GM23248 (cell line): ENCODE measurements at regions of chr19 and their contacts with region 1.

Region 1: DNA sequence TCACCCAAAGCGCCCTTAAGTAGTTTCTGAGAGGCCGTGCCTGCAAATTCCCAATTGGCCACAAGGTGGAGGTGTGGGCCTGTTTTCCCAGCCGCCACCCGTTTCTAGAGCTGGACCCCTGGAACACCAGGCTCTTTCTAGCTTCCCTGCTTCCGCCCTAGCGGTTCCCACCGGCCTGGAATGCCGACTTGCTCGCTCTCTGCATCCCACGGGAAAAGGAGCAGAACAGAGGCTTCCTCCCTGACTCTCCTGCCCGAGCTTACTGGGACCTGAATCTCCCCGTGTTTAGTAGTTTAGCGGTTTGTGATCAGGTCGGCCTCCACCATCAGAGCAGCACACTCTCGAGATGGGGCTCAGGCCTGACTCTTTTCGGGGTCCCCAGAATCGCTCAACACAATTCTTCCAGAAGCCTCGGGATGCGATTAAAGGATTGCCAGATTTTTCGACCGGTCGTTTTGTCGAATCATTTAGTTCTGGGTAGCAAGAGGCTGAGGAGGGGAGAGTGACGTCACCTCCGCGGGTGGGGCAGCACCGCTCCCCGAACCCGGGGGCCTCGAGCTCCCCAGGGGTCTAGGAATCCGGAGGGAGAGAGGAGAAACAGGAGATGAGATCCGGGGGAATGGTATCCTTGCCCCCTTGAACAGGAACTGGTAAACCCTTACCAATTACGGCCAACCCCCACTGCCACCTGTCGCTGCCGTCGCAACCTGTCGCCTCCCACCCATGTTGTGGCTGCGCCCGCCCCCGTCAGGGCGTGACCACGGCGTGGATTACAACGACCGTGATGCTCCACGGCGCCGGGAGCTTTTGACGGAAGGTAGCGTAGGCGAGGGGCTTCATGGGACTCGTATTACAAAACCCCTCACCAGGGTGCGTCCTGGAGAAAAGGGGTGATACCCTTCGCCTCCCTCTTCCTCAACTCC is 8.0 kb downstream of the NAPSA start:
- DNase-seq: peak; percentile 57
- H3K4me3 ChIP-seq: peak overlapping the region; percentile 62
- H3K27ac ChIP-seq: no peak overlapping the region
- H3K4me1 ChIP-seq: no peaks in the 10 kb centered on the region
- H3K27me3 ChIP-seq: no peaks in the 10 kb centered on the region

Region 2: GRCh38 chr19:50794439-50795237 is 437.2 kb after region 1 on chr19:
- in situ Hi-C with region 1: loop called (anchors 25 kb)
- DNase-seq: peak; percentile 34
- H3K4me3 ChIP-seq: no peak overlapping the region
- H3K27ac ChIP-seq: no peak overlapping the region
- H3K4me1 ChIP-seq: no peaks in the 10 kb centered on the region
- H3K27me3 ChIP-seq: no peaks in the 10 kb centered on the region

Region 3: DNA sequence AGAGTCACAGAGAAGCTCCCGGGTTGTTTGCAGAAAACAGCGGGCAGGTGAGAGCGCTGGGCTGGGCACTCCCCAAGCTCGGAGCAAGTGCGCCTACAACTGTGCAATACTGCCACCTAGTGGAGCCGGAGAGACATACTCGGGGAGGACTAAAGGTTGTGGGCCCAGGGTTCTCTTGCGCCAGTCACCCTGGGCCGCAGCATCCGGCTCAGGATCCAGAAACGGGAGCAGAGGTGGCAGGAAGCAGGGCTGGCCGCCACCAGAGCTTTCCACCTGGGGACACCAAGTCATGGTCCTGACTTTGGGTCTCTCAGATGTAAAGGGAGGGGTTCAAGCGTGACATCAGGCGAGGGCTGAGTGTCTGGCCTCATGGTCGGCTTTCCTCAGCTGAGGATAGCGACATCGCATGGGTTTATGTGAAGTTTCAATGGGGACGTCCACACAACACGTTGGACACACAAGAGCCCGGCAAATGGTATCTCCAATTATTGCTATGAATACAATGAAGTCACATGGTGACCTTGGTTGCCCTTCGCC is 564.9 kb after region 1 on chr19:
- in situ Hi-C with region 1: loop called (anchors 25 kb)
- DNase-seq: peak; percentile 82
- H3K4me3 ChIP-seq: no peak overlapping the region
- H3K27ac ChIP-seq: no peak overlapping the region
- H3K4me1 ChIP-seq: no peaks in the 10 kb centered on the region
- H3K27me3 ChIP-seq: peaks cover 23% of the 10 kb centered on the region